T-cell (primary cell): ENCODE measurements at regions of chr1 and their contacts with region 1.

Region 1: GRCh38 chr1:10209905-10210810 is at the start of gene KIF1B:
- DNase-seq: peak; percentile 88 to 97 (median 93)
- ATAC-seq: peak; percentile 99
- H3K4me3 ChIP-seq: peak within 1 kb of the TSS; percentile 72 to 89
- H3K4me3 Mint-ChIP-seq: peak within 1 kb of the TSS; percentile 88 to 91 (median 88)
- H3K27ac ChIP-seq: peak within 1 kb of the TSS; percentile 27
- H3K27ac Mint-ChIP-seq: peak within 1 kb of the TSS; percentile 46 to 58
- H3K4me1 ChIP-seq: peaks cover 0 to 16% of the 10 kb centered on the region in 2 experiments
- H3K4me1 Mint-ChIP-seq: peaks cover 26 to 34% (median 29%) of the 10 kb centered on the region in 3 donors
- H3K27me3 ChIP-seq: peaks cover 0 to 14% of the 10 kb centered on the region in 2 experiments
- H3K27me3 Mint-ChIP-seq: peaks cover 0 to 3% of the 10 kb centered on the region in 2 donors
- total RNA-seq, gene KIF1B: 10.3 to 15.3 (median 13.8) TPM

Region 2: GRCh38 chr1:9890224-9890731 is 319.9 kb before region 1 on chr1:
- CTCF ChIA-PET with region 1: interaction called, 3 to 10 read pairs
- POLR2A ChIA-PET with region 1: no interaction called
- DNase-seq: no peak
- ATAC-seq: no peak
- H3K4me3 ChIP-seq: no peak overlapping the region
- H3K4me3 Mint-ChIP-seq: no peak overlapping the region
- H3K27ac ChIP-seq: no peak overlapping the region
- H3K27ac Mint-ChIP-seq: no peak overlapping the region
- H3K4me1 ChIP-seq: no peaks in the 10 kb centered on the region
- H3K4me1 Mint-ChIP-seq: peaks cover 3 to 17% (median 13%) of the 10 kb centered on the region in 3 donors
- H3K27me3 ChIP-seq: no peaks in the 10 kb centered on the region
- H3K27me3 Mint-ChIP-seq: no peaks in the 10 kb centered on the region

Region 3: GRCh38 chr1:10232163-10232562 is 22.0 kb after region 1 on chr1:
- CTCF ChIA-PET with region 1: no interaction called
- POLR2A ChIA-PET with region 1: no interaction called
- DNase-seq: no peak
- ATAC-seq: no peak
- H3K4me3 ChIP-seq: no peak overlapping the region
- H3K4me3 Mint-ChIP-seq: no peak overlapping the region
- H3K27ac ChIP-seq: no peak overlapping the region
- H3K27ac Mint-ChIP-seq: no peak overlapping the region
- H3K4me1 ChIP-seq: no peaks in the 10 kb centered on the region
- H3K4me1 Mint-ChIP-seq: peaks cover 0 to 6% (median 0%) of the 10 kb centered on the region in 3 donors
- H3K27me3 ChIP-seq: no peaks in the 10 kb centered on the region
- H3K27me3 Mint-ChIP-seq: no peaks in the 10 kb centered on the region

Region 4: GRCh38 chr1:10430216-10431069 is 220.3 kb after region 1 on chr1 and contains the start of gene CENPS:
- CTCF ChIA-PET with region 1: interaction called in 1 of 2 experiments, 16 read pairs
- POLR2A ChIA-PET with region 1: no interaction called
- DNase-seq: peak; percentile 67 to 95 (median 83)
- ATAC-seq: peak; percentile 86 to 88 (median 87)
- H3K4me3 ChIP-seq: peak within 1 kb of the TSS; percentile 74 to 89
- H3K4me3 Mint-ChIP-seq: peak within 1 kb of the TSS; percentile 84 to 91 (median 85)
- H3K27ac ChIP-seq: peak within 1 kb of the TSS; percentile 73
- H3K27ac Mint-ChIP-seq: peak within 1 kb of the TSS; percentile 86 to 88
- H3K4me1 ChIP-seq: peaks cover 7 to 24% of the 10 kb centered on the region in 2 experiments
- H3K4me1 Mint-ChIP-seq: peaks cover 16 to 24% (median 23%) of the 10 kb centered on the region in 3 donors
- H3K27me3 ChIP-seq: no peaks in the 10 kb centered on the region
- H3K27me3 Mint-ChIP-seq: no peaks in the 10 kb centered on the region
- total RNA-seq, gene CENPS: 3.5 to 9.7 (median 5.8) TPM